ENCODE measurements at regions of chr5 and their contacts with region 1.

Region 1: GRCh38 chr5:159209438-159210305 is at the start of gene RNF145:
- DNase-seq: peak; percentile 91
- H3K4me3 Mint-ChIP-seq: peak within 1 kb of the TSS; percentile 97
- H3K27ac Mint-ChIP-seq: peak within 1 kb of the TSS; percentile 99
- H3K4me1 Mint-ChIP-seq: peaks cover 36% of the 10 kb centered on the region
- H3K27me3 Mint-ChIP-seq: no peaks in the 10 kb centered on the region
- total RNA-seq, gene RNF145: 70.0 to 75.3 TPM

Region 2: DNA sequence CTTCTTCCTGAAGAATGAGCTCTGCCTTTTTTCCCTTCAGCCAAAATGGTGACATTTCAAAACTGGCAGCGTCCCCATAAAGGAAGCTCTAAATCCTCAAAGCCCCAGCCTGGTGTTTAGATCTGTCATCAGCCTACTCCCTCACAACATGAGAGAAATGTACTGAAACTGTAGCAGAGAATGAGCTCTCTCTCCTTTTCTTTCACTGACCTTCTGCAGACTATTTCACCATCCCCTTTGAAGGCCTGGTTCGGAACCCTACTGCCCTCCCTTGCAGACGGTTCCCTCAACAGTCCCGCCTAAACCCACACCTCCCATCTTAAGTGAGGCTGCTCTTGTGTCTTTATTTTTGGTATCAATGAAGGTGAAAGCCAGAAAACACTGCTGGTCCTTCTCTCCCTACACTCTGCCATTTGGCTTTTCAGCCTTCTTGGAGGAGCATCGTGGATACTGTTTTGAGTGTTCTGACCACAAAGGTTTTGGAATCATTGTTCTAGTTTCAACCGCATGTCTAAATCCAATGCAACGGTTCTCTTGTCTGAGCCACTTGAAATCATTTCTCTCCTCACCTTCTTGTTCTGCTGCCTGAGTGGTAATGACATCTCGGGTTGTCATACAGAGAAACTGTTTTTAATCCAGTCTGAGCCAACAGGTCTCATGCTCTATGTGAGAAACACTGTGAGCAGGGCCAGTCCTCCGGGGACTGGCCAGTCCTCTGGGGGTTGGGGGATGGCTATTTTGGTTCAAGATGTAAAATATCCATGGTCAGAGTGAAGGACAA is 1990.0 kb before region 1 on chr5:
- CTCF ChIA-PET with region 1: no interaction called
- intact Hi-C with region 1: loop called (anchors 10 kb)
- DNase-seq: peak; percentile 65
- H3K4me3 Mint-ChIP-seq: peak overlapping the region; percentile 45
- H3K27ac Mint-ChIP-seq: peak overlapping the region; percentile 97
- H3K4me1 Mint-ChIP-seq: peaks cover 81% of the 10 kb centered on the region
- H3K27me3 Mint-ChIP-seq: no peaks in the 10 kb centered on the region

Region 3: GRCh38 chr5:159156426-159157238 is 53.0 kb before region 1 on chr5:
- CTCF ChIA-PET with region 1: interaction called, 16 read pairs
- intact Hi-C with region 1: loop called (anchors 1 kb)
- DNase-seq: peak; percentile 58
- H3K4me3 Mint-ChIP-seq: no peak overlapping the region
- H3K27ac Mint-ChIP-seq: peak overlapping the region; percentile 35
- H3K4me1 Mint-ChIP-seq: peaks cover 36% of the 10 kb centered on the region
- H3K27me3 Mint-ChIP-seq: no peaks in the 10 kb centered on the region

Region 4: GRCh38 chr5:159184858-159185381 is 24.8 kb before region 1 on chr5:
- CTCF ChIA-PET with region 1: interaction called, 3 read pairs
- intact Hi-C with region 1: loop called (anchors 1 kb)
- DNase-seq: peak; percentile 74
- H3K4me3 Mint-ChIP-seq: no peak overlapping the region
- H3K27ac Mint-ChIP-seq: peak overlapping the region; percentile 84
- H3K4me1 Mint-ChIP-seq: peaks cover 74% of the 10 kb centered on the region
- H3K27me3 Mint-ChIP-seq: no peaks in the 10 kb centered on the region

Region 5: GRCh38 chr5:159262859-159263567 is 53.3 kb after region 1 on chr5 and contains the start of gene UBLCP1:
- CTCF ChIA-PET with region 1: interaction called, 4 read pairs
- intact Hi-C with region 1: loop called (anchors 1 kb)
- DNase-seq: peak; percentile 82
- H3K4me3 Mint-ChIP-seq: peak within 1 kb of the TSS; percentile 96
- H3K27ac Mint-ChIP-seq: peak within 1 kb of the TSS; percentile 99
- H3K4me1 Mint-ChIP-seq: peaks cover 29% of the 10 kb centered on the region
- H3K27me3 Mint-ChIP-seq: no peaks in the 10 kb centered on the region
- total RNA-seq, gene UBLCP1: 22.7 to 23.0 TPM

Region 6: DNA sequence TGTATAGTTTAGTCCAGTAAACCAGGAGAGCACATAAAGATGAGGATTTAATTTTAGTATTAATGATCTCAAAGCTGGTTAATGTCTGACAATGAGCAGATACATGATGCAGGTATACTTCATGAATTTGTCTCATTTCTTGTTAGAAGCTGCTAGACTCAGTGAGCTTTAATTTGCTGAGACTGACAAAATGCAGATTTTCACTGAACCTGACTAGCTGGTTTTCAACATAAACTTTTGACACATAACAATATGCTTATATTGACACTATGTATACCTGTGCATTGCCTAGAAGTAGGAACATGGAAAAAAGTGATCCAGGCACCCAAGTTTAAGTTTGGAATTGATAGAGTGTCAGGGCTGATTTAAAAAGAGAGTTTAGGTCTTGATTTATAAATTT is 64.3 kb after region 1 on chr5:
- CTCF ChIA-PET with region 1: no interaction called
- intact Hi-C with region 1: no loop called
- DNase-seq: no peak
- H3K4me3 Mint-ChIP-seq: no peak overlapping the region
- H3K27ac Mint-ChIP-seq: no peak overlapping the region
- H3K4me1 Mint-ChIP-seq: peaks cover 20% of the 10 kb centered on the region
- H3K27me3 Mint-ChIP-seq: no peaks in the 10 kb centered on the region

Region 7: DNA sequence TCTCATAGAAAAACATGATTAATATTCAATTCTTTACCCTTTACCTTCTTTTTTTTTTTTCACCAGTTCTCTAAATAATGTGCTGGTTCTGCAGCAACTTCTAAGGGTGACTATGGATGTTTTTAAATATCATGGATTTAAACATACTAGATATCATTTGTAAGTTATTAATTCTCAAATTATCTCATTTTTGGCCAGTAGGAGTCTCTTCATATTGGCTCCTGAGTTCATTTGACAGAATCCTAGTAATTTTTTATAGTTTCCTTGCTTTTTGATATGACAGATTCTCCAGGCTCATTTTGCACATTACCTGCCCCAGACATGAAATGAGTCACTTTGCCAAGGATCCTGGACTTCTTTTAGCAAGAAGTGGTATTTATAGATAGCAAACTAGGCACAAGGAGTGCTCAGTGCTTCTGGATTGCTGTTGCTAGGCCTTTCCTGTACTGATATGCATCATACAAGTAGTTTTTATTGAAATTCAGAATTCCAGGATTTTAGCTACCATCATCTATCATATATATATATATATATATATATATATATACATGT is 322.0 kb after region 1 on chr5:
- CTCF ChIA-PET with region 1: no interaction called
- intact Hi-C with region 1: no loop called
- DNase-seq: no peak
- H3K4me3 Mint-ChIP-seq: no peak overlapping the region
- H3K27ac Mint-ChIP-seq: no peak overlapping the region
- H3K4me1 Mint-ChIP-seq: no peaks in the 10 kb centered on the region
- H3K27me3 Mint-ChIP-seq: no peaks in the 10 kb centered on the region

Region 8: DNA sequence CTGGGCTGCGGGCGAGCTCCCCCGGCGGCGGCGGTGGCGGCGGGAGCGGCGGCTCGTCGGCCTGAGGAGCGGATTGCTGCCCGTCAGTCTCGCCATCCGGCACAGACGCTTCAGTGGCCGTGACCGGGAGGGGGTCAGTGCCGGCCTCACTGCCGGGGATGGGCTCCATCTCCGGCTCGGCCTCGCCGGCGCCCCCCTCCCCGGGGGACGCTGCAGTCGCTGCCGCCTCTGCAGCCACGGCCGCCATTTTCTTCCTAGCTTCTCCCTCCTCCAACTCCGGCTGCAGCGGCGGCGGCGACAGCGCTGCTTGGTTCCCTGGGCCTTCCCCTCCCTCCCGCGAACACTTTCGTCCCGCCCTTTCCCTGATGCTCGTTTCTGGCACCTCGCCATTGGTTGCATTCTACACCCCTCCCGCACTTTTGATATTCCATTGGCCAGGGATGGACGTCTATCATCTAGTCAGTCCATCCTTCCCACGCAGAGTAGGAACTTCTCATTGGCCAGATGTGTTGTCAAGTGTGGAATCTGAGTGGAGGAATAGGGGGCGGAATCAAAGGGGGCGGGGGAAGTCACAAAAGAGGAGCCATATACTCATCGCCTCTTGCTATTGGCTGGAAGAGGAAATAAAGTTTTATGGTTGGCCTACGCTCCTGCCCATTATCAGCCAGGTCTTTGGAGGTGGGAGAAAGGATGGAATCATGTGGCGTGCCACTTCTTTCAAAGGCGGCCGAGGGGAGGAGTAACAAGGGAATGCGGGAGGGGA is 909.7 kb after region 1 on chr5 and contains the start of gene PWWP2A:
- CTCF ChIA-PET with region 1: no interaction called
- intact Hi-C with region 1: loop called (anchors 1 kb)
- DNase-seq: peak; percentile 99
- H3K4me3 Mint-ChIP-seq: peak within 1 kb of the TSS; percentile 97
- H3K27ac Mint-ChIP-seq: peak within 1 kb of the TSS; percentile 92
- H3K4me1 Mint-ChIP-seq: peaks cover 13% of the 10 kb centered on the region
- H3K27me3 Mint-ChIP-seq: no peaks in the 10 kb centered on the region
- total RNA-seq, gene PWWP2A: 14.8 to 15.8 TPM